Sciatic nerve (tissue), 2 donors: ENCODE measurements at regions of chr13 and their contacts with region 1.

Region 1: DNA sequence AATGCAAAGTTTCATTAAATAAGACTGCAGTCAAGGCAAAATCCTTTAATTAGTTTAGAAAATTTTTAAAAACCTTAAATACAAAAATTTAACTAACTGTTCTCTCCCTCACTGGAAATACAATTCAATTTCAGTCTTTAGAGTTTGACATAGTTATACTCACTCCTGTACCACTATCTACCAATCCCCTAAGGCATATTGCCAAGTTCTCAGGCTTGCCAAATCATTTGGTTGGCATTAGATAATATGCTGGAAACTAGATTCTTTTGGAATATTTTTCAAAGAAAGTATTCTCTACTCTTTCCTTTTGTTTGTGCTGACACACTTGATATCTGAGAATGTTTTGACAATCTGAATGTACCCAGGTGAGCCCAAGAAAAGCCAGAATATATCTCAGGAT is 77.2 kb downstream of the TSC22D1 start:
- DNase-seq: no peak
- ATAC-seq: no peak

Region 2: GRCh38 chr13:44969551-44970484 is 470.8 kb after region 1 on chr13:
- intact Hi-C with region 1: loop called (anchors 10 kb)
- DNase-seq: no peak
- ATAC-seq: peak; percentile 80

Region 3: GRCh38 chr13:45662162-45662561 is 1163.2 kb after region 1 on chr13:
- intact Hi-C with region 1: no loop called
- DNase-seq: no peak
- ATAC-seq: no peak